ENCODE measurements at regions of chr19 and their contacts with region 1.

Region 1: DNA sequence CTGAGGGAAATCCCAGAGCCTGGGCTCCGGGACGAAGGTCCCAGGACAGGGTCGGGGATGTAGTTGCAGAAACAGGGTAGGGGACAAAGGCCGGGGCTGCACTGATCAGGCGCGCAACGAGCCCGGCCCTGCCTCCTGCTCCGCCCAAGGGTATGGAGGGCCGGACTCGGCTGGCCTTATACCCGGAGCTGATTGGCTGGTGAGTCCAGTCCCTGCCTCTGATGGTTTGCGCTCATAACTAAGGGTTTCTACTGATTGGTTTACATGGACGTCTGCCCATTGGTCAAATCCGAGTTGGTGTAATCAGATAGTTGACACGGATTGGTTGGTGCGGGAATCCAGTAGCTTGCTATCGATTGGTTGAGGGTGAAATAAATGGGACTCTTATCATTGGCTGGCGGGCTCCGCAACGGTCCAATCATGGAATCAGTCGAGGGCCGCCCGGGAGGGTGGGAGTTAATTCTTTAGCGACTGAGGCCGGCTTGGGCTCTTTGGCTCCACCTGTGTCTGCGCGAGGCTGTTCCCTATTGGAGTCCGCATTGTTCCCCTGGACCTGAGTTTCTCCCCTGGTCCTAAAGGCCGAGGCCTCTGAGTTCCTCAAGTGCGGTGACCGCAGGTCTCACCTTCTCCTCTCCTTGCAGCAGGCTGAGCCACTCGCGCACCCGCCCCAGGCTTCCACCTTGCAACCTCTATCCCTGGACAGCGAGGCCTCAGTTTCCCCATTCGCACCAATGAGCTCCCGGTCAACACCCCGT is 570 bp upstream of the MPND start:
- DNase-seq: peak; percentile 93
- CTCF ChIP-seq: peak; percentile 6

Region 2: GRCh38 chr19:4152241-4152998 is 190.4 kb before region 1 on chr19:
- CTCF ChIA-PET with region 1: no interaction called
- POLR2A ChIA-PET with region 1: no interaction called
- DNase-seq: peak; percentile 11
- CTCF ChIP-seq: no peak

Region 3: DNA sequence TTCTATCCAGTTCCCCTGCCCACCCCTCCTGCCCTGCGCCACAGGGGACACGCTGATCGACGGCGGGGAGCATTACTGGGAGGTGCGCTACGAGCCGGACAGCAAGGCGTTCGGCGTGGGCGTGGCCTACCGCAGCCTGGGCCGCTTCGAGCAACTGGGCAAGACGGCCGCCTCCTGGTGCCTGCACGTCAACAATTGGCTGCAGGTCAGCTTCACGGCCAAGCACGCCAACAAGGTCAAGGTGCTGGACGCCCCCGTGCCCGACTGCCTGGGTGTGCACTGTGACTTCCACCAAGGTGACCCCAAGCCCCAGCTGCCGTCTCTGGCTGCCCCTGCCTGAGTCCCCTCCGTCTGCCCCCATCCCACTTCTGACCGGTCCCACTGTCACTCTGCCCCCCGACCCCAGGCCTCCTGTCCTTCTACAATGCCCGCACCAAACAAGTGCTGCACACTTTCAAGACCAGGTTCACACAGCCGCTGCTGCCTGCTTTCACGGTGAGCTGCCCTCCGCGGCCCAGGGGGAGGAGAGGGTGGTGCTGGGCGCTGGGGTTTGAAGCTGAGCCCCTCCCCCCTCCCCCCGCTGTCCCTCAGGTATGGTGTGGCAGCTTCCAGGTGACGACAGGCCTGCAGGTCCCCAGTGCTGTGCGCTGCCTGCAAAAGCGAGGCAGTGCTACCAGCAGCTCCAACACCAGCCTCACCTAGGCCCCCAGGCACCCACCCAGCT is 19.7 kb before region 1 on chr19:
- CTCF ChIA-PET with region 1: interaction called, 16 read pairs
- POLR2A ChIA-PET with region 1: interaction called, 7 read pairs
- DNase-seq: no peak
- CTCF ChIP-seq: no peak

Region 4: DNA sequence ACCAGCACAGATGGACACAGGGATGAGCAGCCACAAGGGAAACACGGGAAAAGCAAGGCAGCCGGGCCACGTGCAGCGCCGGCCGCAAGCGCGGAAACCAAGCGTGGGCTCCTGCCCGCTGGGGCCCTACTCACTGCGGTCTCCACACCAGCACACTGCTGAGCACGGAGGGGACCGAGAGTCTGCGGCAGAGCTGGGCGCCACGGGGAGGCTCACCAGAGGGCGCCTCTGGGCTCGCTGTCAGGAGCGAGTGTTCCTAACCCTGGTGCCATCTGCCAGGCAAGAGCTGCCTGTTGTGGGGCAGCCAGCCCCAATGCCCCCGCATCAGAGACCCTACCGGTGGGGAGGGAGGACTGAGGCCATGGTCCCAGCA is 27.1 kb after region 1 on chr19:
- CTCF ChIA-PET with region 1: interaction called, 11 read pairs
- POLR2A ChIA-PET with region 1: interaction called, 5 read pairs
- DNase-seq: peak; percentile 71
- CTCF ChIP-seq: peak; percentile 79

Measured in GM10248 (cell line).